ENCODE measurements at regions of chr15 and their contacts with region 1.

Region 1: DNA sequence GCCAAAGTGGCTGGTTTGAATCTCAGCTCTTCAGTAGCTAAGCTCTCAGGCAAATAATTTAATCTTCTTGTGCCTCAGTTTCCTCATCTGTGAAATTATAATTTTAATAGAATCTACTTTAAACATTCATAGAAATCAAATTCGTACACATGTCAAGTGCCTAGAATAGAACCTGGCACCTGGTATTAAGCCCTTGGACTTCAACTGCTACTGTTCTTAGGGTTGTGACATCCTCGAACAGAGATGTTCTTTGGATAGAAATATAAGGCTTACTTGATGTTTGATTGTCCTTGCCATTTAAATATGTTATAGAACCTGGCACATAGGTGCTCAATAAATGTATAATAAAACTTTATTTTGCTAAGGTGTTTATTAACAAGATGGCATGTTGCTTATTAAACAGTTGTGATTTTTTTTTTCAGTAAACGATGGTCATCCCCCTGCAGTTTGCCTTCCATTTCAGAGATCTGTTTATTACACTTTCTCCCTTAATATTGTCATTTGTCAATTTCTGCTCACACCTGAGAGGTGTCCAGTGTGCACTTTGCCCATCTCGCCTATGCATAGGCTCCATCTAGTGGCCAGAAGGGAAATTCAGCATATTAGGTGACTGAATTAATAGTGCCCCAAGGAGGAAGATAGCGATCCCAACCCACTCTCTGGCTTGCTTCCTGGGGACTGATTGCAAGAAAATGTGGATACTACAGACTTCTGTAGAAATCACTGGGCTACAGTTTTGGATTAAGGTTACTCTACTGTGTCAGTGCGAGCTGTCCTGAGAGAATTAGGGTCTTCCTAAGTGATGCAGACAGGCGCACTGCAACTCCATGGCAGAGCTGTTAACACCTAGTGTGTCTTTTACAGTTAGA is 10.7 kb downstream of the IGF1R start:
- DNase-seq: peak; percentile 76
- H3K4me3 Mint-ChIP-seq: no peak overlapping the region
- H3K27ac Mint-ChIP-seq: peak overlapping the region; percentile 3
- H3K4me1 Mint-ChIP-seq: peaks cover 44% of the 10 kb centered on the region
- H3K27me3 Mint-ChIP-seq: no peaks in the 10 kb centered on the region
- CTCF ChIP-seq: peak; percentile 69

Region 2: GRCh38 chr15:98503970-98504369 is 155.1 kb before region 1 on chr15:
- CTCF ChIA-PET with region 1: no interaction called
- POLR2A ChIA-PET with region 1: no interaction called
- intact Hi-C with region 1: no loop called
- DNase-seq: peak; percentile 8
- H3K4me3 Mint-ChIP-seq: no peak overlapping the region
- H3K27ac Mint-ChIP-seq: no peak overlapping the region
- H3K4me1 Mint-ChIP-seq: no peaks in the 10 kb centered on the region
- H3K27me3 Mint-ChIP-seq: peaks cover 84% of the 10 kb centered on the region
- CTCF ChIP-seq: no peak

Region 3: GRCh38 chr15:98581715-98582114 is 77.3 kb before region 1 on chr15:
- CTCF ChIA-PET with region 1: no interaction called
- POLR2A ChIA-PET with region 1: no interaction called
- intact Hi-C with region 1: no loop called
- DNase-seq: no peak
- H3K4me3 Mint-ChIP-seq: no peak overlapping the region
- H3K27ac Mint-ChIP-seq: no peak overlapping the region
- H3K4me1 Mint-ChIP-seq: no peaks in the 10 kb centered on the region
- H3K27me3 Mint-ChIP-seq: peaks cover 68% of the 10 kb centered on the region
- CTCF ChIP-seq: peak; percentile 25

Region 4: DNA sequence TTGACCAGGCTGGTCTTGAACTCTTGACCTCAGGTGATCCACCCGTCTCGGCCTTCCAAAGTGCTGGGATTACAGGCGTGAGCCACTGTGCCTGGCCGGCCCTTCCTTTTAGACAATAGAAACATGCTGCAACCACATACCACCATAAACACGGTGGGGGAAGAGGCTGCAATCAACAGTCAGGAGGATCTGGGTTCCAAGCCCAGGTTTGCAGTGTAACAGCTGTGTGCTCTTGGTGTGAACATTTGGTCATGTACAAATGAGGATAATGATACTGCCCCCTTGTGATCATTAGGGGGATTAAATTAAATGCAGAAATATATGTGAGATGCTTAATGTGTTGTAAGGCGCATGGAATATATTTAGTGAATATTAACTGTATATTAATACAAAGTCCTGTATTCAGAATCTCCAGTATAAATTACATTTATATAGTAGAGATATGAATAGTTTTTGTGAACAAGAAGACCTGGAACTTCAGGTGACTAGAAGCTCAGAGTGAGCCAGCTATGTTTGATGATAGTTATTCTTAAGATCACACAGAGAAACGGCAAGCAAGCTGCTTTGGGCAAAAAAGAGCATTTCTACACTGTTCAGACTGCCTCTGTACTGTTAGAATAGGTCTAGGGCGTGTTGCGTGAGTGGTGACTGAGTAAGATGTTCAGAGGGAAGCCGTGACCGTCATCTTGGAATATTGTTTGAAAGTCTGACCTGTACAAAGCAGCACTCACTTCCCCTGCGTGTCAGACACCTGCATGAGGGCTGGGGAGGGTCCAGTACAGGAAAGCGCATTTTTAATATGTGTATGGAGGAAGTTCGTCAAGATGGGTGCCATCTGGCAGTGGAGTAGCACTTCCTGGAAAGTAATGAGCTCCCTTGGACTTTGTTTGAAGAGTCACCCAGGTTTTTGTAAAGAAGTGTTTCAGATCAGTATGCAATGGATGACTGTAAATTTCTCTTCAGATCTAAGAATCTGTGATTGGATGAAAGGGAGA is 222.8 kb after region 1 on chr15:
- CTCF ChIA-PET with region 1: interaction called, 12 read pairs
- POLR2A ChIA-PET with region 1: interaction called, 8 read pairs
- intact Hi-C with region 1: no loop called
- DNase-seq: peak; percentile 75
- H3K4me3 Mint-ChIP-seq: no peak overlapping the region
- H3K27ac Mint-ChIP-seq: peak overlapping the region; percentile 59
- H3K4me1 Mint-ChIP-seq: peaks cover 20% of the 10 kb centered on the region
- H3K27me3 Mint-ChIP-seq: no peaks in the 10 kb centered on the region
- CTCF ChIP-seq: peak; percentile 53

Region 5: DNA sequence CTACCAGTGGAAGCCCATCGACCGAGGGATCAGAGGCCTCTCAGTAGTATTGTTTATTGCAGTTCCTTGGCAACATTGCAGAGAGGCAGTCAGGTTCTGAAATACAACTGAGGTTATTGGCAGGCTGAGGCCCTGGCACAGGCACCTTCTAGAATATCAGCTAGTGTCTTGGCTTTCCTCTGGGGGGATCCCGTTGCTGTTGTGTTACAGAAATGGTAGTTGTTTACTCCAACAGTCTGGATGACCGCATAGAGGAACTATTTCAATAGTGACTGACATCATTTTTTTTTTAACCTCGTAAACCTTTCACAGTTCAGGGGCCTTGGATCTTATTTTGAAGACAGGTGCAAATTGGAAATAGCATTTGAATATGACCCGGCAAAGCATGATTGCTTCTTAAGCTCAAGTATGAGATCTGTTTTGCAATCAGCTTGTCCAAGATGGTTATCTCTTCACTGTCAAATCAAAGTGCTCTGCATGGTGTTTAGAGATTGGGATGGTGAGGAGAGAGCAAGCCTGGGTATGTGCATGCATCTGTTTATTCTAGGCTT is 284.6 kb after region 1 on chr15:
- CTCF ChIA-PET with region 1: no interaction called
- POLR2A ChIA-PET with region 1: no interaction called
- intact Hi-C with region 1: no loop called
- DNase-seq: no peak
- H3K4me3 Mint-ChIP-seq: no peak overlapping the region
- H3K27ac Mint-ChIP-seq: peak overlapping the region; percentile 11
- H3K4me1 Mint-ChIP-seq: no peaks in the 10 kb centered on the region
- H3K27me3 Mint-ChIP-seq: no peaks in the 10 kb centered on the region
- CTCF ChIP-seq: no peak